OCI-LY7 (cell line): ENCODE measurements at regions of chr4 and their contacts with region 1.

Region 1: GRCh38 chr4:16194214-16194613 is 32.1 kb downstream of the TAPT1 start:
- DNase-seq: no peak
- H3K4me3 ChIP-seq: no peak overlapping the region
- H3K27ac ChIP-seq: no peak overlapping the region
- H3K4me1 ChIP-seq: no peaks in the 10 kb centered on the region
- CTCF ChIP-seq: no peak

Region 2: GRCh38 chr4:15469402-15470127 is 724.6 kb before region 1 on chr4 and contains the start of gene CC2D2A:
- CTCF ChIA-PET with region 1: no interaction called
- POLR2A ChIA-PET with region 1: no interaction called
- intact Hi-C with region 1: no loop called
- DNase-seq: no peak
- H3K4me3 ChIP-seq: no peak within 1 kb of the TSS
- H3K27ac ChIP-seq: no peak within 1 kb of the TSS
- H3K4me1 ChIP-seq: no peaks in the 10 kb centered on the region
- CTCF ChIP-seq: no peak
- total RNA-seq, gene CC2D2A: not detected in 2 replicates

Region 3: DNA sequence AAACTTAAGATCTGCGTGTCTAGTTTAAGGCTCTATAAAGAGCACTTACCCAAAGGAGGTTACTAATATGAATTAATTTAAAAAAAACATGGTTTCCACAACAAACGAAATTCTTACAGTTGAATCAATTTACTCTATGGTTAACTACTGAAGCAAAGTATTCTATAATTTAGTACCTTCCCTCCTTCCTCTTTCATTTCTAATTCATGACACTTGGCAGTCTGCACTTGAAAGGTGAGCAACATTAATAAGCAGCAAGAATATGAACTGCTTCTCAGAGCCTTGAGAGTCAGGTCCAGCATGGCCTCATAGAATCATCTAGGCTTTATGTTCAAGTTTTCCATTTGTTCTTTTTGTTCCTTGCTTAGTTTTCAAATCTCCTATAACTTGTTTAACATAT is 10.6 kb before region 1 on chr4:
- CTCF ChIA-PET with region 1: no interaction called
- POLR2A ChIA-PET with region 1: interaction called, 10 read pairs
- intact Hi-C with region 1: no loop called
- DNase-seq: no peak
- H3K4me3 ChIP-seq: no peak overlapping the region
- H3K27ac ChIP-seq: no peak overlapping the region
- H3K4me1 ChIP-seq: no peaks in the 10 kb centered on the region
- CTCF ChIP-seq: no peak

Region 4: GRCh38 chr4:16270454-16271328 is 76.5 kb after region 1 on chr4:
- CTCF ChIA-PET with region 1: no interaction called
- POLR2A ChIA-PET with region 1: no interaction called
- intact Hi-C with region 1: no loop called
- DNase-seq: peak; percentile 25
- H3K4me3 ChIP-seq: no peak overlapping the region
- H3K27ac ChIP-seq: no peak overlapping the region
- H3K4me1 ChIP-seq: no peaks in the 10 kb centered on the region
- CTCF ChIP-seq: peak; percentile 74